ENCODE measurements at regions of chr16 and their contacts with region 1.

Region 1: GRCh38 chr16:88811769-88812512 is at the start of gene APRT:
- DNase-seq: peak; percentile 98
- H3K4me3 Mint-ChIP-seq: peak within 1 kb of the TSS; percentile 95
- H3K27ac Mint-ChIP-seq: peak within 1 kb of the TSS; percentile 99
- H3K4me1 Mint-ChIP-seq: peaks cover 27% of the 10 kb centered on the region
- H3K27me3 Mint-ChIP-seq: no peaks in the 10 kb centered on the region
- total RNA-seq, gene APRT: 270 to 272 TPM

Region 2: GRCh38 chr16:88315543-88316105 is 496.3 kb before region 1 on chr16:
- CTCF ChIA-PET with region 1: no interaction called
- POLR2A ChIA-PET with region 1: no interaction called
- intact Hi-C with region 1: no loop called
- DNase-seq: no peak
- H3K4me3 Mint-ChIP-seq: no peak overlapping the region
- H3K27ac Mint-ChIP-seq: no peak overlapping the region
- H3K4me1 Mint-ChIP-seq: no peaks in the 10 kb centered on the region
- H3K27me3 Mint-ChIP-seq: peaks cover 10% of the 10 kb centered on the region

Region 3: GRCh38 chr16:88700636-88701482 is 111.1 kb before region 1 on chr16:
- CTCF ChIA-PET with region 1: interaction called, 3 read pairs
- POLR2A ChIA-PET with region 1: interaction called, 28 read pairs
- intact Hi-C with region 1: no loop called
- DNase-seq: peak; percentile 98
- H3K4me3 Mint-ChIP-seq: peak overlapping the region; percentile 81
- H3K27ac Mint-ChIP-seq: peak overlapping the region; percentile 91
- H3K4me1 Mint-ChIP-seq: peaks cover 64% of the 10 kb centered on the region
- H3K27me3 Mint-ChIP-seq: no peaks in the 10 kb centered on the region

Region 4: DNA sequence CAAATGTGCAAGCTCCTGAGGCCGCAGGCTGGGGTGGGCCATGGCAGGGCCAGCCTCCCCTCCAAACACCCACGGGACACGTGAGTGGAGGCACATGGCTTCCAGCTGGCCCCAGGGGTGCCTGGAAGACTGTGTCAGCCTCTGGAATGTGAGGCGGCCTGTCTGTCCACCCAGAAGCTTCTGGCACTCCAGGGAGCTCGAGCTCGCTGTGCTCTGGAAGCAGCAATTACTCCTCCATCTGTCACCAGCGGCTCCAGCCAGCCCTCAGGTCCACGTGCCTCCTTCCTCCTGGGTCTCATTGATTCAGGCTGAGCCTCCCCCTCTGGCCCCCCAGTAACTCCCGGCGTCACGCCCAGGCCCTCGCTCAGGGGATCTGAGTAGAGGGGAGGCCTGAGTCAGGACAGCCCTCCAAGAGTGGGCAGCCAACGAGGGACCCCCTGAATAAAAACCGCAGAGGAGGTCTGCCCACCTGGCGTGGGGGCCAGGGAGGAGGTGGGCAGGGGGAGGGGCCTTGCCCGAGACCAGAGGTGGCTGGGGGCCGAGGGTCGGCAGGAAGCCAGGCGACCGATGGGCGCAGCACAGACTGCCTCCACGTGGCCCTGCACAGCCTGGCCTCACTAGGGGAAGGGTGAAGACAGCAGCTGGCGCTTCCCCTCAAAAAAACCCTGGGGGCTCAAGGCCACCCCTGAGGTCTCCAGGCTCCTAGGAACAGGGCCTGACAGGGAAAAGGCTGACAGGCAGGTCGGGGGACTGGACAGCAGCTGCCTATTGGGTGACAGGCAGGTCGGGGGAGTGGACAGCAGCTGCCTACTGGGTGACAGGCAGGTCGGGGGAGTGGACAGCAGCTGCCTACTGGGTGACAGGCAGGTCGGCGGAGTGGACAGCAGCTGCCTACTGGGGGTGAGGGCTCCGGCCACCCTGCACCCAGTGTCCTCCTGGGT is 38.8 kb before region 1 on chr16:
- CTCF ChIA-PET with region 1: no interaction called
- POLR2A ChIA-PET with region 1: no interaction called
- intact Hi-C with region 1: no loop called
- DNase-seq: no peak
- H3K4me3 Mint-ChIP-seq: no peak overlapping the region
- H3K27ac Mint-ChIP-seq: no peak overlapping the region
- H3K4me1 Mint-ChIP-seq: peaks cover 34% of the 10 kb centered on the region
- H3K27me3 Mint-ChIP-seq: no peaks in the 10 kb centered on the region

Region 5: GRCh38 chr16:88856828-88857733 is 45.1 kb after region 1 on chr16 and contains the starts of genes GALNS and TRAPPC2L:
- CTCF ChIA-PET with region 1: interaction called, 39 read pairs
- POLR2A ChIA-PET with region 1: interaction called, 11 read pairs
- intact Hi-C with region 1: loop called (anchors 1 kb)
- DNase-seq: peak; percentile 99
- H3K4me3 Mint-ChIP-seq: peak within 1 kb of the TSS; percentile 93
- H3K27ac Mint-ChIP-seq: peak within 1 kb of the TSS; percentile 72
- H3K4me1 Mint-ChIP-seq: peaks cover 23% of the 10 kb centered on the region
- H3K27me3 Mint-ChIP-seq: no peaks in the 10 kb centered on the region
- total RNA-seq, gene GALNS: 22.0 to 24.1 TPM
- total RNA-seq, gene TRAPPC2L: 63.6 to 71.5 TPM

Region 6: GRCh38 chr16:88886845-88887521 is 75.0 kb after region 1 on chr16:
- CTCF ChIA-PET with region 1: no interaction called
- POLR2A ChIA-PET with region 1: no interaction called
- intact Hi-C with region 1: no loop called
- DNase-seq: no peak
- H3K4me3 Mint-ChIP-seq: no peak overlapping the region
- H3K27ac Mint-ChIP-seq: no peak overlapping the region
- H3K4me1 Mint-ChIP-seq: no peaks in the 10 kb centered on the region
- H3K27me3 Mint-ChIP-seq: no peaks in the 10 kb centered on the region

Region 7: GRCh38 chr16:89093602-89094251 is 281.8 kb after region 1 on chr16 and contains the start of gene ACSF3:
- CTCF ChIA-PET with region 1: no interaction called
- POLR2A ChIA-PET with region 1: interaction called, 3 read pairs
- intact Hi-C with region 1: loop called (anchors 10 kb)
- DNase-seq: peak; percentile 70
- H3K4me3 Mint-ChIP-seq: peak within 1 kb of the TSS; percentile 97
- H3K27ac Mint-ChIP-seq: peak within 1 kb of the TSS; percentile 94
- H3K4me1 Mint-ChIP-seq: peaks cover 50% of the 10 kb centered on the region
- H3K27me3 Mint-ChIP-seq: peaks cover 4% of the 10 kb centered on the region
- total RNA-seq, gene ACSF3: 36.1 to 37.3 TPM

Region 8: DNA sequence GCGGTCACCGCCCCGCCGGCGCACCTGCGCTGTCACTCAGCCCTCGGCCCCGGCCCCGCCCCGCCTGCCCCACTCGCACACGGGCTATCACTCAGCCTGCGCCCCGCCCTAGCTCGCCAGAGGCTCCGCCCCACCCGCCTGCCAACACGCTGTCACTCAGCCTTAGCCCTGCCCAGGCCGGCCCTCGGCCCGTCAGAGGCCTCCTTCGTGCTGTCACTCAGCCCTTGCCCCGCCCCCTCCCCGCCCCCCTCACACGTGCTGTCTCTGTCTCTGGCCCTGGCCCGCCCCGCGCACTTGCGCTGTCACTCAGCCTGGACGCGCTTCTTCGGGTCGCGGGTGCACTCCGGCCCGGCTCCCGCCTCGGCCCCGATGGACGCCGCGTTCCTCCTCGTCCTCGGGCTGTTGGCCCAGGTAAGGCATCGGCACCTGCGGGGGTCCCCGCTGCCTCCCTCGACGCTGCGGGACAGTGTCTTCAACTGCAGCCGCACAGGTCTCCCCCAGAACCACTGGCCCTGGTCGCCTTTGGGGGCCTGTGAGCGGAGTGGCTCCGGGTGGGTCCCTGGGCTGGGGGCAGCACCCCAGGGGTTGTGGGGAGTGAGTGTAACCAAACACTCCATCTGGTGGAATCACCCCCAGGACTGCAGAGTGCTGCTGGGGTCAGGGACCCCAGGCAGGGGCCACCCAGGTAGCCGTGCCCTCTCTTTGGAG is 359.7 kb after region 1 on chr16 and contains the start of gene CDH15:
- CTCF ChIA-PET with region 1: interaction called, 10 read pairs
- POLR2A ChIA-PET with region 1: no interaction called
- intact Hi-C with region 1: loop called (anchors 2 kb)
- DNase-seq: peak; percentile 98
- H3K4me3 Mint-ChIP-seq: peak within 1 kb of the TSS; percentile 57
- H3K27ac Mint-ChIP-seq: no peak within 1 kb of the TSS
- H3K4me1 Mint-ChIP-seq: peaks cover 7% of the 10 kb centered on the region
- H3K27me3 Mint-ChIP-seq: peaks cover 4% of the 10 kb centered on the region
- total RNA-seq, gene CDH15: not detected